Activated naive CD4-positive, alpha-beta T cell treated with anti-CD3 and anti-CD28 coated beads for 36 hours (primary cell): ENCODE measurements at regions of chrX and their contacts with region 1.

Region 1: DNA sequence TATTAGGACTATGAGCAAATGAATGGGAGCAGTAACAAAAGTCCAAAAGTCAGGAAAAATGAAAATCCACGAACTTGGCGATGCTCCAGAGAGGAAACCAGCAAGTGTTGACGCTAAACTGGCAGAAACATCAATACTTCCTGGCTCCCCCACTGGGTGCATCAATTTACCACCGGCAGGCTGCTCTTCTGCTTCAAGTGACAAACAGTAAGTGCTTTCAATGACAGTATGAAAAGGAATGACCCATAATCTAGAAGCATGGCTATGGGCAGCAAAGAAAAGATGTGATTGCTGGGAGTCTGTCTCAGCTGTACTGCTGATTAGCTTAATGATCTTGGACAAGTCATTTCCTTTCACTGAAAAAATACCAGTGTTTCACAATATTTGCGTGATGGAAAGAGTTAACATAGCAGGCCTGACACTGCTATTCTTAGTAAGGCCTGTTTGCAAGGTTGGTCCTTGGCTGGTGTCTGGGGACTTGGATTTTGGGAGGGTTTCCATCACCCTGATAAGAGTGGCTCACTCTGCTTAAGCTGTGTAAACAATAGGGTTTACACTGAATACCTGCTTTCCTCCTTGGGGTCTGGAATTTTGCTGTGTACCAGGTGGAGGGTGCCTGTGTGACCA is 8.7 kb downstream of the ATP11C start:
- DNase-seq: peak; percentile 5
- H3K4me3 Mint-ChIP-seq: no peak overlapping the region
- H3K27ac Mint-ChIP-seq: no peak overlapping the region
- H3K4me1 Mint-ChIP-seq: peaks cover 42% of the 10 kb centered on the region
- H3K27me3 Mint-ChIP-seq: no peaks in the 10 kb centered on the region

Region 2: GRCh38 chrX:139554376-139554775 is 369.8 kb before region 1 on chrX:
- CTCF ChIA-PET with region 1: no interaction called
- intact Hi-C with region 1: loop called (anchors 1 kb)
- DNase-seq: no peak
- H3K4me3 Mint-ChIP-seq: no peak overlapping the region
- H3K27ac Mint-ChIP-seq: no peak overlapping the region
- H3K4me1 Mint-ChIP-seq: peaks cover 13% of the 10 kb centered on the region
- H3K27me3 Mint-ChIP-seq: peaks cover 10% of the 10 kb centered on the region

Region 3: DNA sequence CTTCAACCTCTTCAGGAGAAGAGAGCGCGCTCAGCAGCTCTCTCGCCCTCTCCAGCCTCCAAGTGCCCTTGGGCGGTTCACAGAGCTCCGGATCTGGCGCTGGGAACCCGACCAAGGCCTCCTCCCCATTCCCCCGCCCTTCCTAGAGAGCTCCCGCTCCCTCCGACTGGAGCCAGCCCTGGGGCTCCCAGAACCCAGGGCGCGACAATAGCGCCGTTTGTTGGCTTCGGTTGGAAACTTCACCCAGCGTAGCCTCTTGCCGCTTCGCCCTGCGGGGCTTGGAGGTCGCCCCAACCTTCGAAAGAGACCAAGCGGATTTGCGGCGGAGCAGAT is 583.8 kb after region 1 on chrX:
- CTCF ChIA-PET with region 1: no interaction called
- intact Hi-C with region 1: no loop called
- DNase-seq: no peak
- H3K4me3 Mint-ChIP-seq: no peak overlapping the region
- H3K27ac Mint-ChIP-seq: no peak overlapping the region
- H3K4me1 Mint-ChIP-seq: peaks cover 7% of the 10 kb centered on the region
- H3K27me3 Mint-ChIP-seq: peaks cover 45% of the 10 kb centered on the region